ENCODE measurements at regions of chr17 and their contacts with region 1.

Region 1: GRCh38 chr17:78745407-78746088 is 36.5 kb downstream of the CYTH1 start:
- DNase-seq: peak; percentile 56
- H3K4me3 Mint-ChIP-seq: peak overlapping the region; percentile 44
- H3K27ac Mint-ChIP-seq: peak overlapping the region; percentile 90
- H3K4me1 Mint-ChIP-seq: peaks cover 91% of the 10 kb centered on the region
- H3K27me3 Mint-ChIP-seq: no peaks in the 10 kb centered on the region

Region 2: GRCh38 chr17:78697554-78698343 is 47.8 kb before region 1 on chr17:
- CTCF ChIA-PET with region 1: no interaction called
- POLR2A ChIA-PET with region 1: no interaction called
- DNase-seq: no peak
- H3K4me3 Mint-ChIP-seq: no peak overlapping the region
- H3K27ac Mint-ChIP-seq: peak overlapping the region; percentile 44
- H3K4me1 Mint-ChIP-seq: peaks cover 10% of the 10 kb centered on the region
- H3K27me3 Mint-ChIP-seq: no peaks in the 10 kb centered on the region

Region 3: DNA sequence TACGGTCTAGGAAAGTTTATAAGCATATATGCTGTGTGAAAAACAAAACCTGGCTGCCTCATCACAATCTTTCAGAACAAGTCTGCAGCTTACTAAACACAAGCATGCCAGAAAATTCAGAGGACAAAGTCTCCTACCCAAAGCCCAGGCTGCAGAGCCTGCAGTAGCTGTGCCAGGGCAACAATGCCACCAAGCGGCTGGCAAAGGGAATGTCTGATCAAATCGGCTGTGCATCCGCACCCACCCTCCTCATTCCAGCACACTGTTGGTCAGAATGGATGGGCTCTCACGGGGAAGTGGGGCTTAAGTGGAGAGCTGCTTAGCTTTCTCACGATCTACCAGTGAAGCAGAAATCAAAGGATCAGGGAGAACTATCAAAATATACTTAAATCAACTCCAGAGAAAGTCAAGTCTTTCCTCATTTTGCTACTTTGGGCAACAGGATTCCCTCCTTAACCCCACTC is 37.0 kb before region 1 on chr17:
- CTCF ChIA-PET with region 1: interaction called, 14 read pairs
- POLR2A ChIA-PET with region 1: interaction called, 30 read pairs
- DNase-seq: peak; percentile 68
- H3K4me3 Mint-ChIP-seq: peak overlapping the region; percentile 29
- H3K27ac Mint-ChIP-seq: peak overlapping the region; percentile 80
- H3K4me1 Mint-ChIP-seq: peaks cover 68% of the 10 kb centered on the region
- H3K27me3 Mint-ChIP-seq: no peaks in the 10 kb centered on the region

Region 4: DNA sequence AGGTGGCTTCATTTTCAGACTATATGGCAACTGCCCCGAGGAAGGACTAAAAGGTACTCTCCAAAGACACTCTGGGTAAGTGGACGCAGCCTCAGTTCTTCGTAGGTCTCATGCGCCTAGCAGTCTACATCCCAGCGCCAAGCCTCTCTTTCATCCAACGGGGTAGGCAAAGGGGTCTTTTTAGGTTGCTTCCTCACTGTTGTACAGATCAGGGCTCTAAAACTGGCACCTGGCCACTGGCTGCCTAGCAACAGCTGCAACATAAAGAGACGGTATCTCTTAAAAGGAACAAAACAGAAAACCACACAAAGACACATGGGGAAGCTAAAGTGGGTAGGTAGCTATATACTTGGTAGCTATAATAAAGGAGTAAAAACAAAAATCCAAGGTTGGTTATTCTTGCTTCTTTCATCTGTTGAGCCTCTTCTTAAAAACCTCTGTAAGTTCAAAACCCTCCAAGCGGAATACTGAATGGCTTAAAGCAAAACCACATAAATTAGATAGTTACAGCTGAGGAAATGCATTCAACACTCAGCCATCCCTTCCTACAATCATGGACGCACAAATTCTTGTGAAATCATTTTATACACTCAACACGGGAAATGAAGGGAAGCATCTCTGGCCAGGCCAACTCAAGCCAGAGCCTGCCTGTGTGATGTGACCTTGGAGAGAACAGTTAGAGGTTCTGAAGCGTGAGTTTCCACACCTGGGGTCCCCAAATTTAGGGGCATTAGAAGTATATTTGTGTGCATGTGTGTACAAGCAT is 13.8 kb after region 1 on chr17:
- CTCF ChIA-PET with region 1: interaction called, 16 read pairs
- POLR2A ChIA-PET with region 1: interaction called, 861 read pairs
- DNase-seq: peak; percentile 79
- H3K4me3 Mint-ChIP-seq: peak overlapping the region; percentile 49
- H3K27ac Mint-ChIP-seq: peak overlapping the region; percentile 78
- H3K4me1 Mint-ChIP-seq: peaks cover 83% of the 10 kb centered on the region
- H3K27me3 Mint-ChIP-seq: no peaks in the 10 kb centered on the region

Region 5: GRCh38 chr17:78781948-78782916 is 36.7 kb after region 1 on chr17 and contains the start of gene CYTH1:
- CTCF ChIA-PET with region 1: interaction called, 7 read pairs
- POLR2A ChIA-PET with region 1: interaction called, 861 read pairs
- DNase-seq: peak; percentile 98
- H3K4me3 Mint-ChIP-seq: peak within 1 kb of the TSS; percentile 85
- H3K27ac Mint-ChIP-seq: peak within 1 kb of the TSS; percentile 98
- H3K4me1 Mint-ChIP-seq: peaks cover 56% of the 10 kb centered on the region
- H3K27me3 Mint-ChIP-seq: no peaks in the 10 kb centered on the region
- total RNA-seq, gene CYTH1: 288 to 309 TPM

Region 6: GRCh38 chr17:78822552-78822951 is 77.0 kb after region 1 on chr17:
- CTCF ChIA-PET with region 1: no interaction called
- POLR2A ChIA-PET with region 1: interaction called, 29 read pairs
- DNase-seq: no peak
- H3K4me3 Mint-ChIP-seq: no peak overlapping the region
- H3K27ac Mint-ChIP-seq: peak overlapping the region; percentile 38
- H3K4me1 Mint-ChIP-seq: peaks cover 54% of the 10 kb centered on the region
- H3K27me3 Mint-ChIP-seq: no peaks in the 10 kb centered on the region

Region 7: GRCh38 chr17:79272666-79273219 is 527.2 kb after region 1 on chr17:
- CTCF ChIA-PET with region 1: no interaction called
- POLR2A ChIA-PET with region 1: no interaction called
- DNase-seq: no peak
- H3K4me3 Mint-ChIP-seq: no peak overlapping the region
- H3K27ac Mint-ChIP-seq: no peak overlapping the region
- H3K4me1 Mint-ChIP-seq: no peaks in the 10 kb centered on the region
- H3K27me3 Mint-ChIP-seq: peaks cover 2% of the 10 kb centered on the region